CD4-positive, alpha-beta memory T cell (primary cell): ENCODE measurements at regions of chr11 and their contacts with region 1.

Region 1: GRCh38 chr11:82959987-82960778 is 58.6 kb downstream of the DDIAS start:
- DNase-seq: peak; percentile 77 to 85 (median 82)
- H3K4me3 ChIP-seq: peak overlapping the region; percentile 13 to 39
- H3K4me3 Mint-ChIP-seq: peak overlapping the region; percentile 60 to 89 (median 80)
- H3K27ac ChIP-seq: peak overlapping the region; percentile 55
- H3K27ac Mint-ChIP-seq: peak overlapping the region; percentile 86 to 96 (median 95)
- H3K4me1 ChIP-seq: peaks cover 75% of the 10 kb centered on the region
- H3K4me1 Mint-ChIP-seq: peaks cover 57 to 88% (median 74%) of the 10 kb centered on the region in 4 donors
- H3K27me3 ChIP-seq: no peaks in the 10 kb centered on the region
- H3K27me3 Mint-ChIP-seq: no peaks in the 10 kb centered on the region

Region 2: DNA sequence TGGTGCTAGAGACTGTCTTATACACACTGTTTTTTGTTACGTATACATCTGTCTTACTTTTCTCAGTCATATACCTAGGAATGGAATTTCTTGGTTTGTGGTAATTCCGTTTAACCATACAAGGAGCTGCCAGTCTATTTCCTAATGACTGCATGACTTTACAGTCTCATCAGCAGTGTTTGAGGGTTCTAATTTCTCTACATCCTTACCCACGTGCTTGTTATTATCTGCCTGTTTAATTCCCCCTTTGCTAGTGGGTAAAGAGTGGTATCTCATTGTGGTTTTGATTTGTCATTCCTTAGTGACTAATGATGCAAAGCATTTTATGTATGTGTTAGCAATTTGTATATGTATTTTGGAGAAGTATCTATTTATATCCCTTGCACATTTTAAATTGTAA is 1234.5 kb before region 1 on chr11:
- CTCF ChIA-PET with region 1: no interaction called
- POLR2A ChIA-PET with region 1: no interaction called
- intact Hi-C with region 1: no loop called
- DNase-seq: no peak
- H3K4me3 ChIP-seq: no peak overlapping the region
- H3K4me3 Mint-ChIP-seq: no peak overlapping the region
- H3K27ac ChIP-seq: no peak overlapping the region
- H3K27ac Mint-ChIP-seq: no peak overlapping the region
- H3K4me1 ChIP-seq: no peaks in the 10 kb centered on the region
- H3K4me1 Mint-ChIP-seq: no peaks in the 10 kb centered on the region
- H3K27me3 ChIP-seq: no peaks in the 10 kb centered on the region
- H3K27me3 Mint-ChIP-seq: no peaks in the 10 kb centered on the region

Region 3: GRCh38 chr11:82927254-82927880 is 32.8 kb before region 1 on chr11:
- CTCF ChIA-PET with region 1: interaction called, 22 read pairs
- POLR2A ChIA-PET with region 1: interaction called, 22 read pairs
- intact Hi-C with region 1: loop called (anchors 1 kb)
- DNase-seq: peak; percentile 50 to 71 (median 65)
- H3K4me3 ChIP-seq: no peak overlapping the region
- H3K4me3 Mint-ChIP-seq: no peak overlapping the region
- H3K27ac ChIP-seq: no peak overlapping the region
- H3K27ac Mint-ChIP-seq: peak overlapping the region in 2 of 7 donors; percentile 2 to 57
- H3K4me1 ChIP-seq: peaks cover 8% of the 10 kb centered on the region
- H3K4me1 Mint-ChIP-seq: peaks cover 16 to 22% (median 18%) of the 10 kb centered on the region in 4 donors
- H3K27me3 ChIP-seq: no peaks in the 10 kb centered on the region
- H3K27me3 Mint-ChIP-seq: no peaks in the 10 kb centered on the region

Region 4: GRCh38 chr11:82978422-82979099 is 18.4 kb after region 1 on chr11:
- CTCF ChIA-PET with region 1: interaction called, 6 read pairs
- POLR2A ChIA-PET with region 1: interaction called, 4 read pairs
- intact Hi-C with region 1: loop called (anchors 2 kb)
- DNase-seq: no peak
- H3K4me3 ChIP-seq: no peak overlapping the region
- H3K4me3 Mint-ChIP-seq: peak overlapping the region in 5 of 8 donors; percentile 4 to 45 (median 5)
- H3K27ac ChIP-seq: no peak overlapping the region
- H3K27ac Mint-ChIP-seq: peak overlapping the region in 2 of 7 donors; percentile 3 to 65
- H3K4me1 ChIP-seq: no peaks in the 10 kb centered on the region
- H3K4me1 Mint-ChIP-seq: peaks cover 10 to 11% (median 11%) of the 10 kb centered on the region in 4 donors
- H3K27me3 ChIP-seq: no peaks in the 10 kb centered on the region
- H3K27me3 Mint-ChIP-seq: no peaks in the 10 kb centered on the region

Region 5: DNA sequence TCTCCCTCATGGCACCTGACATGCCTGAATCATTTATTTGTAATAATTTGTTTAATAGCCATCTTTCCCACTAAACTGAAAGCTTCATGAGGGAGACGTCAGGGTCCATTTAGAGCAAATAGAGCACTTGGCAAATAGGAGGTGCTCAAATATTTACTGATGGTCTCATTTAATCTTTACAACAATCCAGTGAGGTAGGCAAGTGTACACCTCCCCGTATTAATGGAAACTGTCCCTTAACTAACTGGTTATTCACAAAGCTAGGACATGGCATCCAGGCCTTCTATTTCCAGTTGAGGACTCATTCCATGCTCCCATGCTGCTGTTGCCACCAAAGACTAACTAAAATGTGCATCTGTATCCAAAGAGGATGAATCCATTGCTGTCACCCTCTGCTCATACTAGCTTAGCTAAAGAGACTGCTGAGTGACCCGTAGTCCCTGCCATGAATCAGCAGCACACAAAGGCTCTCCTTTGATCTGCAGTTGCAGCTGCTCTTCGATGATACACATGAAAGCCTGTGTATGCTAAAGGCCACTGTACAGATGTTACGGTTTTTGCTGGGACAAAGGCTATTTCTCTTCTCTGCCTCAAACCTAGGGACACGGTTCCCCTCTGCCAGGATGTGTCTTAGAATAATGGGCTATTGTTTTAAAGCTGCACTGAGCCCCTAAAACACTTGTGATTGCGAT is 28.9 kb after region 1 on chr11:
- CTCF ChIA-PET with region 1: interaction called, 15 read pairs
- POLR2A ChIA-PET with region 1: interaction called, 5 read pairs
- intact Hi-C with region 1: no loop called
- DNase-seq: no peak
- H3K4me3 ChIP-seq: no peak overlapping the region
- H3K4me3 Mint-ChIP-seq: no peak overlapping the region
- H3K27ac ChIP-seq: no peak overlapping the region
- H3K27ac Mint-ChIP-seq: peak overlapping the region in 2 of 7 donors; percentile 14 to 21
- H3K4me1 ChIP-seq: no peaks in the 10 kb centered on the region
- H3K4me1 Mint-ChIP-seq: peaks cover 0 to 6% (median under 1%) of the 10 kb centered on the region in 4 donors
- H3K27me3 ChIP-seq: no peaks in the 10 kb centered on the region
- H3K27me3 Mint-ChIP-seq: no peaks in the 10 kb centered on the region

Region 6: GRCh38 chr11:83063073-83063754 is 103.0 kb after region 1 on chr11:
- CTCF ChIA-PET with region 1: interaction called, 3 read pairs
- POLR2A ChIA-PET with region 1: interaction called, 11 read pairs
- intact Hi-C with region 1: no loop called
- DNase-seq: peak in 4 of 5 donors; percentile 27 to 40 (median 30)
- H3K4me3 ChIP-seq: peak overlapping the region; percentile 0 to 46
- H3K4me3 Mint-ChIP-seq: peak overlapping the region; percentile 83 to 91 (median 86)
- H3K27ac ChIP-seq: peak overlapping the region; percentile 11
- H3K27ac Mint-ChIP-seq: peak overlapping the region; percentile 43 to 96 (median 92)
- H3K4me1 ChIP-seq: peaks cover 22% of the 10 kb centered on the region
- H3K4me1 Mint-ChIP-seq: peaks cover 16 to 29% (median 21%) of the 10 kb centered on the region in 4 donors
- H3K27me3 ChIP-seq: no peaks in the 10 kb centered on the region
- H3K27me3 Mint-ChIP-seq: no peaks in the 10 kb centered on the region